ENCODE measurements at regions of chr6 and their contacts with region 1.

Region 1: GRCh38 chr6:146700078-146700686 is 101.4 kb downstream of the ADGB start:
- DNase-seq: peak; percentile 64
- ATAC-seq: peak; percentile 67
- H3K4me3 ChIP-seq: no peak overlapping the region
- H3K27ac ChIP-seq: no peak overlapping the region
- H3K4me1 ChIP-seq: no peaks in the 10 kb centered on the region
- H3K27me3 ChIP-seq: no peaks in the 10 kb centered on the region; the same call in 1 of the 2 replicates
- CTCF ChIP-seq: peak; percentile 51 to 74 (median 52); a peak in 4 of 6 replicates
- POLR2A ChIP-seq: no peak
- RAD21 ChIP-seq: peak; percentile 82

Region 2: DNA sequence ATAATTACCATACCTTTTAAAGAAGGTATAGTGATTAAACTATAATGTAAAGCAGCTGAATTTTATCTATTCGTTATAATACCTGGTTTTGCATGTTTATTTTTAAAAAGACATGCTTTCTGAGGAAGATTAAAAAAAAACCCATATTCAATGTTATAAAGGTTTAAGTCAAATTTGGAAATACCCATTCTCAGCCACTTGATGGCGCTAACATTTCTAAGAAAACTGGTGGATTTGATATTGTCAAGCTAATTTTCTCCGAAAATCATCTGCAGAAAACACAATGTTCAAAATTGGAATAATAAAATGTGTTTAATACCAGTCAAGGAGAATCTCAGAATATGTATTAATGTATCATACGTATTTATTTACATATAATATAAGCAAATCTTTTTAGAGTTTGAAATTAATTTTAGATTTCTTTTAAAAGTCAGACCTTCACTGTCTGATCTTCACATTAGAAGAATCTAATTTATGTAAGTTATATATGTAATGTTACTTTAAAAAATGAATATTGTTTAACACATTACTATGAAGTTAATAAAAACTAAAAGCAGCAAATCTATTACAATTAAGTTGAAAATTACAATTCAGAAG is 771.0 kb before region 1 on chr6:
- CTCF ChIA-PET with region 1: interaction called, 3 read pairs
- POLR2A ChIA-PET with region 1: no interaction called
- RAD21 ChIA-PET with region 1: no interaction called
- intact Hi-C with region 1: loop called (anchors 1 kb)
- DNase-seq: peak; percentile 7
- ATAC-seq: no peak
- H3K4me3 ChIP-seq: no peak overlapping the region
- H3K27ac ChIP-seq: no peak overlapping the region
- H3K4me1 ChIP-seq: no peaks in the 10 kb centered on the region
- H3K27me3 ChIP-seq: no peaks in the 10 kb centered on the region
- CTCF ChIP-seq: peak; percentile 34 to 78 (median 58); a peak in 5 of 6 replicates
- POLR2A ChIP-seq: no peak
- RAD21 ChIP-seq: peak; percentile 62

Region 3: GRCh38 chr6:146041282-146041681 is 658.9 kb before region 1 on chr6:
- CTCF ChIA-PET with region 1: interaction called, 30 read pairs
- POLR2A ChIA-PET with region 1: no interaction called
- RAD21 ChIA-PET with region 1: no interaction called
- intact Hi-C with region 1: loop called (anchors 1 kb)
- DNase-seq: peak; percentile 18
- ATAC-seq: peak; percentile 85
- H3K4me3 ChIP-seq: no peak overlapping the region
- H3K27ac ChIP-seq: no peak overlapping the region
- H3K4me1 ChIP-seq: no peaks in the 10 kb centered on the region
- H3K27me3 ChIP-seq: 0 out of 2 replicates have a peak, but pooled peaks cover 7% of the 10 kb centered on the region
- CTCF ChIP-seq: peak; percentile 49 to 55 (median 52); a peak in 5 of 6 replicates
- POLR2A ChIP-seq: no peak
- RAD21 ChIP-seq: peak; percentile 77

Region 4: GRCh38 chr6:146679386-146679785 is 20.8 kb before region 1 on chr6:
- CTCF ChIA-PET with region 1: no interaction called
- POLR2A ChIA-PET with region 1: no interaction called
- RAD21 ChIA-PET with region 1: no interaction called
- intact Hi-C with region 1: no loop called
- DNase-seq: no peak
- ATAC-seq: no peak
- H3K4me3 ChIP-seq: no peak overlapping the region
- H3K27ac ChIP-seq: no peak overlapping the region
- H3K4me1 ChIP-seq: no peaks in the 10 kb centered on the region
- H3K27me3 ChIP-seq: no peaks in the 10 kb centered on the region; the same call in 1 of the 2 replicates
- CTCF ChIP-seq: no peak
- POLR2A ChIP-seq: no peak
- RAD21 ChIP-seq: no peak

Region 5: DNA sequence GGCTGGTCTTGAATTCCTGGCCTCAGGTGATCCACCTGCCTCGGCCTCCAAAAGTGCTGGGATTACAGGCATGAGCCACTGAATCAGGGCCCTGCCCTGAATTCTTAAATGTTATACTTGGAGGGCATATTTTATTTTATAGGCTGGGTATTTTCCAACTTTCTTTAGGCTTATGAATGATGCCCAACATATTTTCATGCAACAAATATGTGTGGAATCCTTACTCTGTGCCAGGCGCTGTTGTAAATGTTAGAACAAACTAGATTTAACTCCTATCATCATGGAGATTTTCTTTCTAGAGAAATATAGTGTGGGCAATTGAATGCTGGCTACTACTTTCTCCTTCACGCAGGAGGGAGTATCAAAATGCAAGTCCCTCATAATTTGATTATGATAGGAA is 879.5 kb after region 1 on chr6:
- CTCF ChIA-PET with region 1: no interaction called
- POLR2A ChIA-PET with region 1: no interaction called
- RAD21 ChIA-PET with region 1: no interaction called
- intact Hi-C with region 1: no loop called
- DNase-seq: no peak
- ATAC-seq: no peak
- H3K4me3 ChIP-seq: no peak overlapping the region
- H3K27ac ChIP-seq: no peak overlapping the region
- H3K4me1 ChIP-seq: no peaks in the 10 kb centered on the region
- H3K27me3 ChIP-seq: no peaks in the 10 kb centered on the region
- CTCF ChIP-seq: no peak
- POLR2A ChIP-seq: no peak
- RAD21 ChIP-seq: no peak

Measured in HCT116 (cell line).